GM23248 (cell line): ENCODE measurements at regions of chr16 and their contacts with region 1.

Region 1: DNA sequence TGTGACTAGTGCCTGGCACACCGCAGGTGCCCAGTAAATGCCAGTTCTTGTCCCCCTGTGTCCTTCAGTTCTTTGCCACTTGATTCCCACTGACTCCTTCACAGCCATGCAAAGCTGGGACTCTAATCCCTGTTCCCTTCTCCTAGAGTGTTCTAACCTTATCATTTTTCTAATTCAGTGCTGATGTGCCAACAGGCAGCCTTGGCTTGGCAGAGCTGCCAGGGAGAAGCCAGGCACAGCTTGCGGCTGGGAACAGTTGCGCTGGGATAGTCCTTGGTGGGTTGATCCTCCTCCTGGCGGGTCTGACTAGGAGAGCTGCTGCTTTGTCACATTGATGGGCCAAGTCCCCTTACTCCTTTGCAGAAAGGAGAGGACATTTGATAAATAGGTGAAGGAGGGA is 654.2 kb downstream of the HS3ST4 start:
- DNase-seq: no peak
- H3K4me3 ChIP-seq: no peak overlapping the region
- H3K27ac ChIP-seq: no peak overlapping the region
- H3K4me1 ChIP-seq: no peaks in the 10 kb centered on the region
- H3K27me3 ChIP-seq: no peaks in the 10 kb centered on the region

Region 2: DNA sequence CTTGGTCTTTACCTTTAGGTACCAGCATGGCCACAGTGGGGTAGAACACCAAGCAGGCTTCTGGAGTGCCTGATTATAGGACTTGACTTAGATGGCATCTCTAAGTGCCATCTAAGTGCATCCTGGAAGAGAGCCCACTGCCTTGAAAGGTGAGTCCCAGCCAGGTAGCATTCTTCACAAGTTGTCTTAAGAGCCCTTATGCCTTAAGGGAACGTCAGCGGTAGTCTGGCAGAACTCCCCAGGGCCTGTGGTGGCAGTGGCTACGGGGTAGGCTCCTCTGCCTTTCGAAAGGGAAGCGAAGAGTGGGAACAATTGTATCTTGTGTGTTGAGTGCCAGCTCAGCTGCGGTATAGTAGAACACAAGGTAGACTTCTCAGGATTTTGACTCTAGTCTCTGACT is 105.2 kb before region 1 on chr16:
- in situ Hi-C with region 1: no loop called
- DNase-seq: no peak
- H3K4me3 ChIP-seq: no peak overlapping the region
- H3K27ac ChIP-seq: no peak overlapping the region
- H3K4me1 ChIP-seq: no peaks in the 10 kb centered on the region
- H3K27me3 ChIP-seq: no peaks in the 10 kb centered on the region

Region 3: GRCh38 chr16:26263406-26263805 is 82.6 kb before region 1 on chr16:
- in situ Hi-C with region 1: loop called (anchors 10 kb)
- DNase-seq: no peak
- H3K4me3 ChIP-seq: no peak overlapping the region
- H3K27ac ChIP-seq: no peak overlapping the region
- H3K4me1 ChIP-seq: no peaks in the 10 kb centered on the region
- H3K27me3 ChIP-seq: no peaks in the 10 kb centered on the region